ENCODE measurements at regions of chr10 and their contacts with region 1.

Region 1: GRCh38 chr10:103396064-103396788 is at the starts of genes ATP5MK and PDCD11:
- DNase-seq: peak; percentile 100
- H3K4me3 ChIP-seq: peak within 1 kb of the TSS; percentile 85 to 99 (median 93)
- H3K27ac ChIP-seq: peak within 1 kb of the TSS; percentile 88 to 96 (median 92)
- H3K4me1 ChIP-seq: peaks cover 34 to 48% (median 43%) of the 10 kb centered on the region in 4 donors
- H3K27me3 ChIP-seq: no peaks in the 10 kb centered on the region
- CTCF ChIP-seq: peak in 1 of 3 experiments; percentile 3
- EP300 ChIP-seq: no peak
- POLR2A ChIP-seq: peak; percentile 7
- total RNA-seq, gene ATP5MK: 199 to 591 (median 327) TPM
- total RNA-seq, gene PDCD11: 12.0 to 17.4 (median 15.0) TPM

Region 2: DNA sequence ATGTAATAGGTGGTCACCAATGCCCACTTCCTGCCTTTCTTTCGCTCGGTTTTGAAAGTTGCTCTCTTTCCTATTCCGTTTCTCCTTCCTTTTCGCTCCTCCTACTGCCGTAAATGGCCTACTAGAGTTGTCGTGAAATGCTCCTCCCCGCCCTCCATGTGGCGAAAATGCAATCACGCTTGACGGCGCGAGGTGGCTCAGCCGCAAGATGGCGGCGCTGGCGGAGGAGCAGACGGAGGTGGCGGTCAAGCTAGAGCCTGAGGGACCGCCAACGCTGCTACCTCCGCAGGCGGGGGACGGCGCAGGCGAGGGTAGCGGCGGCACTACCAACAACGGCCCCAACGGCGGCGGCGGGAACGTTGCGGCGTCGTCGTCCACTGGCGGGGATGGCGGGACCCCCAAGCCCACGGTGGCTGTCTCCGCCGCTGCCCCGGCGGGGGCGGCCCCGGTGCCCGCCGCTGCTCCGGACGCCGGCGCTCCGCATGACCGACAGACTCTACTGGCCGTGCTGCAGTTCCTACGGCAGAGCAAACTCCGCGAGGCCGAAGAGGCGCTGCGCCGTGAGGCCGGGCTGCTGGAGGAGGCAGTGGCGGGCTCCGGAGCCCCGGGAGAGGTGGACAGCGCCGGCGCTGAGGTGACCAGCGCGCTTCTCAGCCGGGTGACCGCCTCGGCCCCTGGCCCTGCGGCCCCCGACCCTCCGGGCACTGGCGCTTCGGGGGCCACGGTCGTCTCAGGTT is 28.3 kb before region 1 on chr10 and contains the start of gene TAF5:
- intact Hi-C with region 1: loop called (anchors 5 kb)
- DNase-seq: peak; percentile 93
- H3K4me3 ChIP-seq: peak within 1 kb of the TSS; percentile 80 to 98 (median 88)
- H3K27ac ChIP-seq: peak within 1 kb of the TSS; percentile 88 to 92 (median 90)
- H3K4me1 ChIP-seq: peaks cover 10 to 33% (median 21%) of the 10 kb centered on the region in 4 donors
- H3K27me3 ChIP-seq: no peaks in the 10 kb centered on the region
- CTCF ChIP-seq: peak in 1 of 3 experiments; percentile 14
- EP300 ChIP-seq: no peak
- POLR2A ChIP-seq: peak; percentile 65
- total RNA-seq, gene TAF5: 2.3 to 7.4 (median 4.5) TPM